Activated CD4-positive, alpha-beta memory T cell treated with anti-CD3 and anti-CD28 coated beads, Interleukin-2, amount 10 ng/mL, durations not matched to agents 7 days and 5 days (primary cell): ENCODE measurements at regions of chr1 and their contacts with region 1.

Region 1: DNA sequence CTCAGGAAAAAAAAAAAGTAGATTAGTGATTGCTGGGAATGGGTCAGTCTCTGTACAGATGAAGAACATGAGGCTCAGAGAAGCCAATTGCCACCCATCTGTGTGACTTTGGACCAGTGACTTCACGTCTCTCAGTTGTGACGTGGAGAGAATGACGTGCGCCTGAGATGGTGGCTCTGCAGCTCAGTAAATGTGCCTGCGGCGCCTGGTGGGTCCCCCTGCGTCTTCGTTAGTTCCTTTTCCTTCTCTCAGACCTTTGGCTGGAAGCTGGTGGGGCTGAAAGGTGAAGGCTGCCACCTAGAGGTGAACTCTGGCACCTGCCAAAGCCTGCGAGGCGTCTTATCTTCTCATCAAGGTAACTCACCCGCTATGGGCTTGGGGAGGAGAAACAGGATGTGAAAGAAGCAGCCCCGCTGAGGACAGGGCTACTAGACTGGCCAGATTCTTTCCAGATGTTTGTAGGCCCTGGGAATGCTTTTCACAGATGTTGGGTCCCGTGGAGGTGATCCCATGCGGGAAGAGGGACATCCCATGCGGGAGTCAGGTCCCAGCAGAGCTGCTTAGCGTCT is 8.7 kb upstream of the E2F2 start:
- DNase-seq: peak; percentile 95
- H3K4me3 Mint-ChIP-seq: no peak overlapping the region
- H3K27ac Mint-ChIP-seq: peak overlapping the region; percentile 38
- H3K4me1 Mint-ChIP-seq: peaks cover 28% of the 10 kb centered on the region
- H3K27me3 Mint-ChIP-seq: peaks cover 6% of the 10 kb centered on the region

Region 2: DNA sequence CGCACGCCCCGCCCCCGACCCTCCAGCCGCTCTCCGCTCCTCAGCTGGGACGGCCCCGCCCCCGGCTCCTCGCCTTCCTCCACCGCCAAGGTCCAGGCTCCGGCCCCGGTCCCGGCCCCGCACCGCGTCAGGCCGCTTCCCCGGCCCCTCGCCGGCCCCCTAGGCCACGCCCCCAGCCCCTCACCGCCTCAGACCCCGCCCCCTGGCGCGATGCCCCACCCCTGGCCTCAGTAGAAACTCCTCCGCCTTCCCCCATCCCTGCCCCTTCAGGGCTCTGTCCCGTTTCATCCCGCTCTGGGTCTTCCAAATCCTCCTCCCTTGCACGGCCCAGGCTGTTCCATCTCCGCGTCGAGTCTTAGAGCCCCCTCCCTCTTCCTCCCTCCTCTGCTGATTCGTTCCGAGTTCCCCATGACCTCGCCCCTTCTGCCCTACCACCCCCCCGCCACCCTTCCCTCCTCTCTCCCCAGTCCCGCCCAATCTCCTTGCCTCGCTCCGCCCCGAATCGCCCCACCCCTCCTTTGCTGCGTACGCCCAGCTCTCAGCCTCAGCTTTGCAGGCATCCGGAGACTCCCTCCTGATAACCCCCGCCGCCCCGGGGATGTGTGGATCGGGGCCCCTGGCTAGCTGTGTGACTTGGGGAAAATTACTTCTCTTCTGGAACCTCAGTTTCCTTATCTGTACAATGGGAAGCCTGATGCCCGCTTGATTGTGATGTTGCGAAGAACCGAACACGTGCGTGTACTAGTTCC is 55.4 kb before region 1 on chr1:
- CTCF ChIA-PET with region 1: interaction called, 19 read pairs
- POLR2A ChIA-PET with region 1: no interaction called
- DNase-seq: peak; percentile 93
- H3K4me3 Mint-ChIP-seq: peak overlapping the region; percentile 77
- H3K27ac Mint-ChIP-seq: peak overlapping the region; percentile 31
- H3K4me1 Mint-ChIP-seq: peaks cover 26% of the 10 kb centered on the region
- H3K27me3 Mint-ChIP-seq: peaks cover 65% of the 10 kb centered on the region

Region 3: DNA sequence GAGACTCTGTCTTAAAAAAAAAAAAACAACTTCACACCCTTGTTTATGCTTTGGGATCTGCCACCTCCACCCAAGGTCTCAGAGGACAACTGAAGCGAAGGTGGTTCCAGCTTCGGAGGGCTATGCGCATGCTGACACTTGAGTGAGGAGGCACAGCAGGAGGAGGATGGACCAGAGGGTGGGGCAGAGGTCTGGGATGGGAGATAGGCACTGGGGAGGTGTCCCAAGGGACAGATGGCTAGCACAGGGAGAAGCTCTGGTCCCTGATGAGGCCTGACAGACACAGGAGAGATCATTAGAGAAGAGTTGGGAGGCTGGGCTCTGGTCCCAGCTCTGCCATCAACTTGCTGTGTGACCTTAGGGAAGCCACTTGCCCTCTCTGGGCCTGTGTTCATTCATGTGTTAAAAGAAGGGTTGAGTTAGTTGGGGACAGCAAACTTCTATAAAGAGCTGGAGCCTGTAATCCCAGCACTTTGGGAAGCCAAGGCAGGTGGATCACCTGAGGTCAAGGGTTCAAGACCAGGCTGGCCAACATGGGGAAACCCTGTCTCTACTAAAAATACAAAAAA is 25.6 kb before region 1 on chr1:
- CTCF ChIA-PET with region 1: interaction called, 23 read pairs
- POLR2A ChIA-PET with region 1: interaction called, 4 read pairs
- DNase-seq: no peak
- H3K4me3 Mint-ChIP-seq: no peak overlapping the region
- H3K27ac Mint-ChIP-seq: no peak overlapping the region
- H3K4me1 Mint-ChIP-seq: peaks cover 4% of the 10 kb centered on the region
- H3K27me3 Mint-ChIP-seq: no peaks in the 10 kb centered on the region

Region 4: GRCh38 chr1:23524716-23525401 is 14.9 kb before region 1 on chr1:
- CTCF ChIA-PET with region 1: interaction called, 131 read pairs
- POLR2A ChIA-PET with region 1: interaction called, 44 read pairs
- DNase-seq: peak; percentile 70
- H3K4me3 Mint-ChIP-seq: peak overlapping the region; percentile 99
- H3K27ac Mint-ChIP-seq: peak overlapping the region; percentile 97
- H3K4me1 Mint-ChIP-seq: peaks cover 72% of the 10 kb centered on the region
- H3K27me3 Mint-ChIP-seq: no peaks in the 10 kb centered on the region

Region 5: GRCh38 chr1:23664837-23665795 is 125.3 kb after region 1 on chr1:
- CTCF ChIA-PET with region 1: interaction called, 11 read pairs
- POLR2A ChIA-PET with region 1: no interaction called
- DNase-seq: peak; percentile 26
- H3K4me3 Mint-ChIP-seq: no peak overlapping the region
- H3K27ac Mint-ChIP-seq: peak overlapping the region; percentile 51
- H3K4me1 Mint-ChIP-seq: peaks cover 10% of the 10 kb centered on the region
- H3K27me3 Mint-ChIP-seq: peaks cover 2% of the 10 kb centered on the region